ENCODE measurements at regions of chr16 and their contacts with region 1.

Region 1: DNA sequence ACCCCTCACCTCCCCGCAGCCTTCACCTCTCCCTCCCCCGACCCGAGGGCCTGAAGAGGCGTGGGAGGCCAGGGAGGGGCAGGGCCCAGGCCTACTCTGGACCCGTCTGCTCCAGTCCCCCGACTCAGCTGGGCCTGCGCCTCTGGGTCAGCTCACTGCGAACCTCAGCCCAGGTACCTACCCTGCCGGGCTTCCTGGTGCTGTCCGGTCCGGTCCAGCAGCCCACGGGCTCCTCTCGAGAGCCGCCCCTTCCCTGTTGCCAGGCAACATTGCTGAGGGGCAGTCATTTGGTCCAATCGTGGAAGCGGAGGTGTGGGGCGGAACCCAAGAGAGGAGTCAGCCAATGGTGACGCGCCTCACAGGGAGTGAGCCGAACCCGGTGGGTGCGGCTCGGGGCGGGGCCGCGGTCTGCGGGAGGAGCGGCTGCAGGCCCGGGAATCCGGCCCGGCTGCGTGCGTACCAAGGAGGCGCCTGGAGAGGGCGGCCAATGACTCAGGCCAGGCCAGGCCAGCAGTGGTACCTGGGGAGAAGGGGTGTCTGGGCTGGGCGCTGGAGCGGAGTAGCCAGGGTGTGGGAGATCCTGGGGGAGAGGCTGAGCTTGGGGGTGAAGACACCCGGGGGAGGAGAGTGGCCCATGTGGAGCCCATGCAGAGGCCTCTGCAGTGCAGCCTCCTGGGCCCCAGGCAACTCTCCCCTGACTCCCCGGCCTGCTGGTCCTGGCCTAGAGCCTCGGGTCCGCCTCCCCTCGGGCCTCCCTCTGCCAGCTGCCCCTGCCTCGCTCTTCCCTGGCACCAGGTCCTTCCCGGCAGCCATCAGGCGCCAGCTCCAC is at the start of gene MEAK7:
- DNase-seq: peak; percentile 93 to 99 (median 96)
- ATAC-seq: peak; percentile 99
- H3K4me3 ChIP-seq: peak within 1 kb of the TSS; percentile 97
- H3K4me3 Mint-ChIP-seq: peak within 1 kb of the TSS; percentile 79 to 94 (median 89)
- H3K27ac ChIP-seq: peak within 1 kb of the TSS; percentile 80
- H3K27ac Mint-ChIP-seq: peak within 1 kb of the TSS; percentile 52 to 88 (median 81)
- H3K4me1 ChIP-seq: peaks cover 23 to 49% of the 10 kb centered on the region in 2 donors
- H3K4me1 Mint-ChIP-seq: peaks cover 31 to 59% (median 55%) of the 10 kb centered on the region in 7 donors
- H3K27me3 ChIP-seq: no peaks in the 10 kb centered on the region
- H3K27me3 Mint-ChIP-seq: no peaks in the 10 kb centered on the region
- total RNA-seq, gene MEAK7: 6.3 to 56.1 (median 9.3) TPM

Region 2: GRCh38 chr16:83807710-83808572 is 696.7 kb before region 1 on chr16 and contains the start of gene HSBP1:
- CTCF ChIA-PET with region 1: no interaction called
- POLR2A ChIA-PET with region 1: no interaction called
- intact Hi-C with region 1: loop called in 1 of 2 experiments (anchors 5 kb)
- DNase-seq: peak; percentile 85 to 93 (median 91)
- ATAC-seq: peak; percentile 100
- H3K4me3 ChIP-seq: peak within 1 kb of the TSS; percentile 90
- H3K4me3 Mint-ChIP-seq: peak within 1 kb of the TSS; percentile 91 to 99 (median 98)
- H3K27ac ChIP-seq: peak within 1 kb of the TSS; percentile 87
- H3K27ac Mint-ChIP-seq: peak within 1 kb of the TSS; percentile 87 to 98 (median 95)
- H3K4me1 ChIP-seq: peaks cover 9 to 21% of the 10 kb centered on the region in 2 donors
- H3K4me1 Mint-ChIP-seq: peaks cover 19 to 55% (median 48%) of the 10 kb centered on the region in 7 donors
- H3K27me3 ChIP-seq: no peaks in the 10 kb centered on the region
- H3K27me3 Mint-ChIP-seq: peaks cover 0 to 5% (median 0%) of the 10 kb centered on the region in 5 donors
- total RNA-seq, gene HSBP1: 20.6 to 78.3 (median 32.3) TPM

Region 3: GRCh38 chr16:84024854-84025253 is 479.8 kb before region 1 on chr16:
- CTCF ChIA-PET with region 1: no interaction called
- POLR2A ChIA-PET with region 1: no interaction called
- intact Hi-C with region 1: no loop called
- DNase-seq: no peak
- ATAC-seq: no peak
- H3K4me3 ChIP-seq: no peak overlapping the region
- H3K4me3 Mint-ChIP-seq: no peak overlapping the region
- H3K27ac ChIP-seq: no peak overlapping the region
- H3K27ac Mint-ChIP-seq: peak overlapping the region in 1 of 9 donors; percentile 65
- H3K4me1 ChIP-seq: peaks cover 0 to 4% of the 10 kb centered on the region in 2 donors
- H3K4me1 Mint-ChIP-seq: peaks cover 0 to 13% (median 7%) of the 10 kb centered on the region in 7 donors
- H3K27me3 ChIP-seq: no peaks in the 10 kb centered on the region
- H3K27me3 Mint-ChIP-seq: peaks cover 8 to 24% (median 18%) of the 10 kb centered on the region in 5 donors

Region 4: DNA sequence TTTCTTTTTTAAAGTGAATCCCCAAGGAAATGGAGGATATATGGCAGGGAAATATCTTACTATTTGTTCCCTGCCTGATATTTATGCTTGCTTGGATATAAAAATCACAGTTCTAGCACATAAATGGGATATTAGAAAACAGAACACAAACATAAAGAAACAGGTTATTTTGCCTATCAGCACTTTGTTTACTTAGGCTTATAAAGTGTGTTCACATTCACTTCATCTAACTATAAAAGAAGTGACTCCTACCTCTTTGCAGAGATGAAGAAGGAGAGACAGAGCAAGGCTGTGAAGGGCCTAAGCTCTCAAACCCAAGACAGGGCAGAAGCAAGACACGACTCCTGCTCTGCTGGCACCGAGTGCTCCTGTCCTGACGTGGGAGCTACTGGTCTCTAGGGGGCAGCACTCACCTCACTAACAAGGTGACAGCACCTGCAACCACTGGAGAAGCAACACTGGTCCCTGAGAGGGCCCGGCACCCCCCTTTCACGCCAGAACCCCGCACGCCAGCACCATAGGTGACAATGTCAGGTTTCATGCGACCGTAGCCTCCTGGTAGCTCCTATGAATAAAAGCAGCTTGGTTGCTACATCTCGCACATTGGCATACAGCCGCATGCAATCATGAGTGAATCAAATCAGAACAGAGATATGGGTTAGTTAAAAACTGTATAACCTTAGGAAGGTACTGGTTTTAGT is 419.9 kb before region 1 on chr16:
- CTCF ChIA-PET with region 1: no interaction called
- POLR2A ChIA-PET with region 1: no interaction called
- intact Hi-C with region 1: loop called in 1 of 2 experiments (anchors 10 kb)
- DNase-seq: peak; percentile 31 to 71 (median 65)
- ATAC-seq: peak; percentile 87
- H3K4me3 ChIP-seq: no peak overlapping the region
- H3K4me3 Mint-ChIP-seq: peak overlapping the region in 1 of 10 donors; percentile 18
- H3K27ac ChIP-seq: no peak overlapping the region
- H3K27ac Mint-ChIP-seq: peak overlapping the region in 1 of 9 donors; percentile 15
- H3K4me1 ChIP-seq: peaks cover 4 to 24% of the 10 kb centered on the region in 2 donors
- H3K4me1 Mint-ChIP-seq: peaks cover 31 to 59% (median 52%) of the 10 kb centered on the region in 7 donors
- H3K27me3 ChIP-seq: no peaks in the 10 kb centered on the region
- H3K27me3 Mint-ChIP-seq: no peaks in the 10 kb centered on the region

Region 5: GRCh38 chr16:84277237-84277823 is 227.3 kb before region 1 on chr16:
- CTCF ChIA-PET with region 1: interaction called, 7 read pairs
- POLR2A ChIA-PET with region 1: no interaction called
- intact Hi-C with region 1: loop called (anchors 1 kb)
- DNase-seq: peak; percentile 27 to 73 (median 58)
- ATAC-seq: peak; percentile 78
- H3K4me3 ChIP-seq: no peak overlapping the region
- H3K4me3 Mint-ChIP-seq: no peak overlapping the region
- H3K27ac ChIP-seq: no peak overlapping the region
- H3K27ac Mint-ChIP-seq: no peak overlapping the region
- H3K4me1 ChIP-seq: no peaks in the 10 kb centered on the region
- H3K4me1 Mint-ChIP-seq: no peaks in the 10 kb centered on the region
- H3K27me3 ChIP-seq: no peaks in the 10 kb centered on the region
- H3K27me3 Mint-ChIP-seq: peaks cover 0 to 10% (median 0%) of the 10 kb centered on the region in 5 donors

Region 6: GRCh38 chr16:84607694-84608093 is 103.1 kb after region 1 on chr16:
- CTCF ChIA-PET with region 1: no interaction called
- POLR2A ChIA-PET with region 1: interaction called, 14 read pairs
- intact Hi-C with region 1: no loop called
- DNase-seq: peak in 2 of 9 donors; percentile 46 to 47
- ATAC-seq: peak; percentile 73
- H3K4me3 ChIP-seq: peak overlapping the region; percentile 36
- H3K4me3 Mint-ChIP-seq: peak overlapping the region; percentile 66 to 89 (median 74)
- H3K27ac ChIP-seq: peak overlapping the region; percentile 38
- H3K27ac Mint-ChIP-seq: peak overlapping the region; percentile 76 to 96 (median 94)
- H3K4me1 ChIP-seq: peaks cover 88 to 94% of the 10 kb centered on the region in 2 donors
- H3K4me1 Mint-ChIP-seq: peaks cover 67 to 94% (median 93%) of the 10 kb centered on the region in 7 donors
- H3K27me3 ChIP-seq: no peaks in the 10 kb centered on the region
- H3K27me3 Mint-ChIP-seq: no peaks in the 10 kb centered on the region

Region 7: DNA sequence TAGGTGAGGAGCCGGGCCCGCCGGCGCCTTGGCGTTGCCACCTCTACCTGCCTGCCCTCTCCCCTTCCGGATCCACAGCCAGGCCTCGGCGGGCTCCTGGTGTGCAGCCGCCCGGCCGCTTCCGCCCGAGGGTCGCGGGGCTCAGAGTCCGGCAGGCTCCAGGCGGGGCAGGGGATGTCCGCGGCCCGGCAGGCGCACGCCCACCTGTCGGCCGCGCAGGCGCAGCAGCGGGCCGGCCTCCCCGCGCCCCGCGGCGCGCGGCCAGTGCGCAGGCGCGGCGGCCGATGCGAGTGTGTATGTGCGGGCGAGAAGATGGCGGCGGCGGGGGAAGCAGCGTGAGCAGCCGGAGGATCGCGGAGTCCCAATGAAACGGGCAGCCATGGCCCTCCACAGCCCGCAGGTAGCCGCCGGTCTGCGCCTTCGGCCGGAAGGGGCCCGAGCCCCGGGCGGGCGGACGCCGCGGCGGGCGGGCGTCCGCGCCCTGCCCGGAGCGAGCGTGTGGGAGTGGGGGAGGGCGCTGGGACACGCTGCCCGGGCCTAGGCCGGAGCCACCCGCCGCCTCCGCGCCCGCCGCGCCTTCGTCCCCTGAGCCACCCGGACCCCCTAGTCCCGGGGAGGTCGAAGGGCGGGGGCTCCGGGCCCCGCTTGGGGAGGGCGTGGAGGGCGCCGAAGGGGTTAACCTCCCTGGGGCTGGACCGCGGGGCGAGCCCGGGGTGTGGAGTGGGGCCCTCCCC is 195.2 kb after region 1 on chr16 and contains the start of gene USP10:
- CTCF ChIA-PET with region 1: interaction called, 3 read pairs
- POLR2A ChIA-PET with region 1: no interaction called
- intact Hi-C with region 1: loop called in 1 of 2 experiments (anchors 1 kb)
- DNase-seq: peak; percentile 75 to 93 (median 88)
- ATAC-seq: peak; percentile 91
- H3K4me3 ChIP-seq: peak within 1 kb of the TSS; percentile 61
- H3K4me3 Mint-ChIP-seq: peak within 1 kb of the TSS; percentile 92 to 99 (median 98)
- H3K27ac ChIP-seq: peak within 1 kb of the TSS; percentile 87
- H3K27ac Mint-ChIP-seq: peak within 1 kb of the TSS; percentile 92 to 99 (median 96)
- H3K4me1 ChIP-seq: peaks cover 11 to 22% of the 10 kb centered on the region in 2 donors
- H3K4me1 Mint-ChIP-seq: peaks cover 19 to 46% (median 42%) of the 10 kb centered on the region in 7 donors
- H3K27me3 ChIP-seq: no peaks in the 10 kb centered on the region
- H3K27me3 Mint-ChIP-seq: peaks cover 0 to 4% (median 0%) of the 10 kb centered on the region in 5 donors
- total RNA-seq, gene USP10: 88.4 to 113 (median 112) TPM

Region 8: DNA sequence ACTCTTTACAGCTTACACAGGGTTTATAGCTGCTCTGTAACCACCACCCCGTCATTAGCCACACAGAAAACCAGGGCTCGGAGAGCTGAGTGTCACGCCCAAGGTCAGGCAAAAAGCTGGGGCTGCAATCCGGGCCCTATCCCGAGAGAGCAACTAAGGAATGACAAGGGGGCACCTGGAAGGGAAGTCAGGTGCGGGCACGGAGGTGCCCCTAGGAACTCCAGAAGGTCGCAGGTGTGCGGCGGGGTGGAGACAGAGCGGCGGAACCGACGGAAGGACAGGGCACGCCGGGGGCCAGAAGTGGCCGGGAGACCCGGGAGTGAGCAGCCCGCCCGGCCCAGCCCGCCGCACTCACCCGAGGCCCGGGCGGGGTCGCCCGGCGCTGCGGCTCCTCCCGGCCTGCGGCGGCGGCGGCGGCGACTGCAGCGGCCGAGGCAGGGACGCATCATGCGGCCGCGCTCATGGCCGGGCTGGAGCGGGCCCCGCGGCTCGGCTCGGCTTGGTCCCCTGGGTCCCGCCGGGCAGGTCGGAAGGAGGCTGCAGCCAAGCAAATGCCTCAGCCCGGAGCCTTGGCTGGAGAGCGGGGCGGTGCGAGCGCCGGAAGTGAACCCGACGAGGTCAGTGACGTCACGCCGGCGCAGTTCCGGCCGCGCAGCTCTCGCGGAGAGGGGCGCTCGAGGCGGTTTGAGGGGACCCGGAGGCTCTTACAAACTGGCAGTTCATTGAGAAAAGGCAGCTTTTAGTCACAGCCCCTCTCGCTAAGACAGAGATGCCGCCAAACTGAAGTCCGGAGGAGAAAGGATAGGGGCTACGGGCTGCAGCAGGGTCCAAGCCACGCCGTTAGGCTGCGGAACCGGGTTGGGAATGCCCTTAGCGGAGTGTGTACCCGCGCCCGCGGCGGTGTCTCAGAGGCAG is 506.6 kb after region 1 on chr16 and contains the start of gene ZDHHC7:
- CTCF ChIA-PET with region 1: no interaction called
- POLR2A ChIA-PET with region 1: no interaction called
- intact Hi-C with region 1: loop called in 1 of 2 experiments (anchors 2 kb)
- DNase-seq: peak; percentile 76 to 87 (median 85)
- ATAC-seq: peak; percentile 96
- H3K4me3 ChIP-seq: peak within 1 kb of the TSS; percentile 99
- H3K4me3 Mint-ChIP-seq: peak within 1 kb of the TSS; percentile 94 to 100 (median 98)
- H3K27ac ChIP-seq: peak within 1 kb of the TSS; percentile 92
- H3K27ac Mint-ChIP-seq: peak within 1 kb of the TSS; percentile 95 to 100 (median 99)
- H3K4me1 ChIP-seq: peaks cover 14 to 16% of the 10 kb centered on the region in 2 donors
- H3K4me1 Mint-ChIP-seq: peaks cover 27 to 59% (median 43%) of the 10 kb centered on the region in 7 donors
- H3K27me3 ChIP-seq: no peaks in the 10 kb centered on the region
- H3K27me3 Mint-ChIP-seq: peaks cover 0 to 5% (median 0%) of the 10 kb centered on the region in 5 donors
- total RNA-seq, gene ZDHHC7: 31.7 to 62.2 (median 33.4) TPM

Measured in naive thymus-derived CD4-positive, alpha-beta T cell (primary cell).